ENCODE measurements at regions of chr3 and their contacts with region 1.

Region 1: GRCh38 chr3:130276203-130276803 is 69.2 kb upstream of the COL6A5 start:
- DNase-seq: no peak
- H3K4me3 ChIP-seq: no peak overlapping the region
- H3K27ac ChIP-seq: no peak overlapping the region
- H3K4me1 ChIP-seq: no peaks in the 10 kb centered on the region
- H3K27me3 ChIP-seq: no peaks in the 10 kb centered on the region
- CTCF ChIP-seq: peak in 2 of 3 experiments; percentile 75 to 83; a peak in 3 of 4 replicates
- EP300 ChIP-seq: no peak
- POLR2A ChIP-seq: no peak
- RAD21 ChIP-seq: peak; percentile 95

Region 2: DNA sequence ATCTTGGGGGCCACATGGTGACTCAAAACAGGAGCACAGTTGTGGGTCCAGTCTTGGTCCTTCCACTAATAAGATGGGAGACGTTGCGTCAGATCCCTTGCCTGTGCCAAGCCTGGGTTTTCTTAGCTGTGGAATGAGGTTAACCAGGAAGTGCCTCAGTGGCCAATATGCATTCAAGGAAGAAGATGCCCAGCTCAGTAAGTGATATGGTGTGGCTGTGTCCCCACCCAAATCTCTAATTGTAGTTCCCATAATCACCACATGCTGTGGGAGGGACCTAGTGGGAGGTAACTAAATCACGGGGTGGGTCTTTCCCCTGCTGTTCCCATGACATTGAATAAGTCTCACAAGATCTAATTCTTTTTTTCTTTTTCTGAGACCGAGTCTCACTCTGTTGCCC is 188.2 kb before region 1 on chr3:
- CTCF ChIA-PET with region 1: no interaction called
- POLR2A ChIA-PET with region 1: no interaction called
- DNase-seq: no peak
- H3K4me3 ChIP-seq: no peak overlapping the region
- H3K27ac ChIP-seq: no peak overlapping the region
- H3K4me1 ChIP-seq: no peaks in the 10 kb centered on the region
- H3K27me3 ChIP-seq: no peaks in the 10 kb centered on the region
- CTCF ChIP-seq: no peak
- EP300 ChIP-seq: no peak
- POLR2A ChIP-seq: no peak
- RAD21 ChIP-seq: no peak

Region 3: GRCh38 chr3:130529513-130530215 is 253.4 kb after region 1 on chr3:
- CTCF ChIA-PET with region 1: interaction called, 10 read pairs
- POLR2A ChIA-PET with region 1: no interaction called
- DNase-seq: no peak
- H3K4me3 ChIP-seq: no peak overlapping the region
- H3K27ac ChIP-seq: no peak overlapping the region
- H3K4me1 ChIP-seq: no peaks in the 10 kb centered on the region; a peak in 2 of 7 replicates
- H3K27me3 ChIP-seq: no peaks in the 10 kb centered on the region
- CTCF ChIP-seq: peak in 2 of 3 experiments; percentile 12 to 33; a peak in 2 of 4 replicates
- EP300 ChIP-seq: no peak
- POLR2A ChIP-seq: no peak
- RAD21 ChIP-seq: peak in 1 of 2 experiments; percentile 33; a peak in 2 of 4 replicates

Region 4: DNA sequence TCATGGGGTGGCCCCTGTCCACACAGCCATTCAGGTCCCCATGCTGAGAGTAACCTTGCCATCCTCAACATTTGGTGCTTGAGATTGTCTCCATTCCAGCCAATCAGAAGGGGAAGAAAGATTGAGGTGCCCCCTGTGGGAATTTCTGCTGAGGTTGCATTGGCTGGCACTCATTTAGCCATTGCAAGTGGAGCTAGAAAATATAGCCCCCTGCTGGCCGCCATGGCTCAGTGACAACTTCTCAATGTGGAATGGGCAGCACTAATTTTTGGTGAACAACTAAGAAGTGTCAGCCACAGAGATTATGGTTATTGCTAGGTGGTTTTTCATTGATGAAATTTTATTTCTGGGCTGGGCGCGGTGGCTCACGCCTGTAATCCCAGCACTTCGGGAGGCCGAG is 262.7 kb after region 1 on chr3:
- CTCF ChIA-PET with region 1: interaction called, 44 read pairs
- POLR2A ChIA-PET with region 1: no interaction called
- DNase-seq: peak; percentile 25 to 70
- H3K4me3 ChIP-seq: no peak overlapping the region
- H3K27ac ChIP-seq: no peak overlapping the region
- H3K4me1 ChIP-seq: no peaks in the 10 kb centered on the region
- H3K27me3 ChIP-seq: no peaks in the 10 kb centered on the region
- CTCF ChIP-seq: peak; percentile 53 to 81 (median 79)
- EP300 ChIP-seq: no peak
- POLR2A ChIP-seq: no peak
- RAD21 ChIP-seq: peak; percentile 62 to 75

Measured in H1 (cell line).